Activated T-helper 1 cell treated with anti-CD3 and anti-CD28 coated beads, Interleukin-12 subunit alpha, Interleukin-12 subunit beta, Interleukin-2, Interleukin-4 antibody, amounts not matched to agents 30 ng/mL and 10 ng/mL and 1 ng/mL, durations not matched to agents 14 hours and 24 hours and 36 hours (primary cell): ENCODE measurements at regions of chr3 and their contacts with region 1.

Region 1: DNA sequence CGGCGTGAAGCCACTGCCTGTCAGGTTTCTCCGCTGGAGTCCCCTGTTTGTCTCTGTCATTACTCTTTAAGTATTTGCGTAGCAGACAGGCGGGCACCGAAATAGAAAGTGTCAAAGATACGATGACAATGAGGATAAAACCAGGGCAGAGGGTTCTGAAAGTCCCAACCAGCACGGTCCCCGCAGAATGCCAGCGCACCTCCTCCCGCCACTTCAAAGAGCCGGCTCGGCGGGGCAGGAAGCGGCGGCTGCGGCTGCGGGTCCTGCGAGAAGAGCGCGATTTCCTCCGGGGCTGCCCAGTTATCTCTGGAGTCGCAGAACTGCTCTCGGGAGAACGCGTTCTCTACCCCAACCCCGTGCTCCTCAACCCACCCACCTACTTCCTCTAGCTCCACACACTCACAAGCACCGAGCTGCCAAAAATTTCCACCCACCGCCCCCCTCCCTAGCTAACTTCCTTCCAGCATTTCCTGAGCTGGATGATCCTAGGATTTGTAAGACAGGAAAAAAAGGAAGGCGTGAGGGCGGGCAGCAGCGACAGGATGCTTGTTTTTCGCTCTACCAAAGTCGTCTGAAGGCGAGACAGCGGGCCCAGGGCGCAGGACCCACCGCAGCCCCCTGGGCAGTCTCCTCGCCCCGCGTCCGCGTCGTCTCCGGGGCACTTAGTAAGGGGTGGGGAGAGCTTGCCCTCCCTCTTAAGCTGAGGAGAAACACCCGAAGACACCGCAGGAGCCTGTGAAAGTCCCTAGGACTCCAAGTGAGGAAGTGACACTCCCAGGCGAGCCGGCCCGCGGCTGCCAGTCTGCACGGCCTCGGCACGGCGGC is at the start of gene ARHGAP31:
- DNase-seq: peak; percentile 82
- H3K4me3 Mint-ChIP-seq: peak within 1 kb of the TSS; percentile 85
- H3K27ac Mint-ChIP-seq: peak within 1 kb of the TSS; percentile 78
- H3K4me1 Mint-ChIP-seq: peaks cover 55% of the 10 kb centered on the region
- H3K27me3 Mint-ChIP-seq: peaks cover 42% of the 10 kb centered on the region
- total RNA-seq, gene ARHGAP31: 7.5 and 8.0 TPM in 2 replicates

Region 2: GRCh38 chr3:118909763-118910162 is 384.3 kb before region 1 on chr3:
- intact Hi-C with region 1: no loop called
- DNase-seq: no peak
- H3K4me3 Mint-ChIP-seq: no peak overlapping the region
- H3K27ac Mint-ChIP-seq: no peak overlapping the region
- H3K4me1 Mint-ChIP-seq: peaks cover 4% of the 10 kb centered on the region
- H3K27me3 Mint-ChIP-seq: peaks cover 13% of the 10 kb centered on the region

Region 3: GRCh38 chr3:119352849-119353502 is 58.9 kb after region 1 on chr3:
- intact Hi-C with region 1: loop called (anchors 2 kb)
- DNase-seq: no peak
- H3K4me3 Mint-ChIP-seq: no peak overlapping the region
- H3K27ac Mint-ChIP-seq: no peak overlapping the region
- H3K4me1 Mint-ChIP-seq: peaks cover 19% of the 10 kb centered on the region
- H3K27me3 Mint-ChIP-seq: peaks cover 28% of the 10 kb centered on the region

Region 4: DNA sequence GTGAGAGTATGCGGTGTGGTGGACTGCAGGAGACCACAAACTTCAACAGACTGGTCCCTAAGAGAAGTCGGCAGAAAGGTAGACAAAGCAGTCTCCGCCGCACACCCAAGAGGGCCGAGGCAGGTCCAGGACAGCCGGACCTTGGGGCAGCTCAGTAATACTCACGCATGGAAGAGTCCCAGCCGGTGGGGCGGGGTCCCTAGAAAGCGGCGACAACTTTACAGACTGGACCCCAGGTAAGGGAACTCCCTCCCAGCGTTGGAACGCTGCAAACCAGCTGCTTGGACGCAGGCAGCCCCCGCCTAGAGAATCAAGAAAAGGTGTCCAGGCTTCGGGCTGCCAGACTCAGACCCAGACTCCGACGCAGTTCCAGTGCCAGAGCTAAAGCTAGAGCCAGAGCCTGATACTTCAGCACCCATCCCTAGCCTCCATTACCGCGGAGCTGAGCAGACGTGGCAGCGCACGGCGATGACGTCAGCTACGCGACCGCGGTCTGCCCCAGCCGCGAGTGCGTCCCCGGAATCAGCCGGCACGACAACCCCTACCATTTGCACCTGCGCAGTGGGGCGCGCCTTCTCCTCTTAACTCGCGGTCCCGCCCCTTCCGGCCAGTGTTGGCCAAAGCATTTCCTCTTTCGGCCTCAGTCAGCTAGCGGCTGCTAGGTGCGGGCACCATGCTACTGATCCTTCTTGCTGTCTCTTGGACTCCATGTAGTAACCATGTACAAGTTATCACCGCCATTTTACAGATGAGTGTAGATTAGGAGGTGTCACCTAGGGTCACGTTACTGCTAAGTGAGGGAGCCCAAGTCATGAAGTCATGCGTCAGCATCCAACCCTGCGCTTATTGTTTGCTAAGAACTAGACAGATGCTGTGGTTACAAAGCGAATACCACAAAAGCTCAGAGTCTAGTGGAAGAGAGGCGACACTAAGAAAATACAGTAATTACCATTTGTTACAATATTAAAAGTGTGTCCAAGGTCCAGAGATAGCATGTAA is 169.4 kb after region 1 on chr3 and contains the start of gene TMEM39A:
- intact Hi-C with region 1: loop called (anchors 1 kb)
- DNase-seq: peak; percentile 98
- H3K4me3 Mint-ChIP-seq: peak within 1 kb of the TSS; percentile 98
- H3K27ac Mint-ChIP-seq: peak within 1 kb of the TSS; percentile 97
- H3K4me1 Mint-ChIP-seq: peaks cover 49% of the 10 kb centered on the region
- H3K27me3 Mint-ChIP-seq: peaks cover 3% of the 10 kb centered on the region
- total RNA-seq, gene TMEM39A: 51.3 and 56.9 TPM in 2 replicates

Region 5: GRCh38 chr3:119508172-119508845 is 214.2 kb after region 1 on chr3:
- intact Hi-C with region 1: loop called (anchors 1 kb)
- DNase-seq: peak; percentile 31
- H3K4me3 Mint-ChIP-seq: peak overlapping the region; percentile 5
- H3K27ac Mint-ChIP-seq: peak overlapping the region; percentile 89
- H3K4me1 Mint-ChIP-seq: peaks cover 39% of the 10 kb centered on the region
- H3K27me3 Mint-ChIP-seq: no peaks in the 10 kb centered on the region

Region 6: DNA sequence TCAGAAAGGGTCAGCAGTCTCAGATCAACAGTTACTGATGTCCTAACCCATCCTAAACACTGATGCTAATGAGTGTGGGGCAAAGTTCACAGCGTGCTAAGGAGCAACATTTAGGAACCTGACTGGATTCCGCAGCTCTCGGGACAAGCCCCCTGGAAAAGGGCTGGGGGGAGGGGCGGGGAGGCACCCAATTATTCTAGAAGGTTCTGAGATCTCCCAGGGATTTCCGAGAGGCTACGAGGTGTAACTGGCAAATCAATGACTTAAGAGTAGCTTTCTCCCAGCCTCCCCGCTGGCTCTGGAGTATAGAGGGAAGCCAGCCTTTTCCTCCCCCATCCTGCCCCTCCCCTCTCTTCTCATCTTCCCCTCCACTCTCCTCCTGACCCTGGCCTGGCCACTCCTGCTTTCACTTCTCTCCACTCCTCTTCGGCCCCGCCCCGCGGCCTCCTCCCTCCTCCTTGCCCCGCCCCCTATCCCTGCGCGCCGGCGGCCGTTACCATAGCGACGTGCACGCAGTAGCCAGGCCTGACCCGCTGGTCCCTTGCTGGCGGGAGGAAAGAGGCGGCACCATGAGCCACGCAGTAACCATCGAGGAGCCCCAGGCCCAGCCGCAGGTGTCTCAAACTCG is 408.6 kb after region 1 on chr3 and contains the start of gene CFAP91:
- intact Hi-C with region 1: loop called (anchors 1 kb)
- DNase-seq: peak; percentile 78
- H3K4me3 Mint-ChIP-seq: peak within 1 kb of the TSS; percentile 67
- H3K27ac Mint-ChIP-seq: no peak within 1 kb of the TSS
- H3K4me1 Mint-ChIP-seq: peaks cover 37% of the 10 kb centered on the region
- H3K27me3 Mint-ChIP-seq: peaks cover 29% of the 10 kb centered on the region
- total RNA-seq, gene CFAP91: 0.24 TPM in 1 of 2 replicates, not detected in the other